Activated B cell treated with CpG ODN at 0.5 μM for 24 hours (primary cell): ENCODE measurements at regions of chr2 and their contacts with region 1.

Region 1: GRCh38 chr2:177254433-177255226 is 9.9 kb downstream of the NFE2L2 start:
- DNase-seq: no peak
- ATAC-seq: no peak
- H3K4me3 Mint-ChIP-seq: no peak overlapping the region
- H3K27ac Mint-ChIP-seq: no peak overlapping the region
- H3K4me1 Mint-ChIP-seq: peaks cover 87% of the 10 kb centered on the region
- H3K27me3 Mint-ChIP-seq: no peaks in the 10 kb centered on the region
- CTCF ChIP-seq: no peak

Region 2: GRCh38 chr2:177239932-177240630 is 14.5 kb before region 1 on chr2:
- CTCF ChIA-PET with region 1: no interaction called
- POLR2A ChIA-PET with region 1: no interaction called
- intact Hi-C with region 1: loop called (anchors 1 kb)
- DNase-seq: no peak
- ATAC-seq: peak; percentile 84
- H3K4me3 Mint-ChIP-seq: peak overlapping the region; percentile 49
- H3K27ac Mint-ChIP-seq: peak overlapping the region; percentile 70
- H3K4me1 Mint-ChIP-seq: peaks cover 74% of the 10 kb centered on the region
- H3K27me3 Mint-ChIP-seq: no peaks in the 10 kb centered on the region
- CTCF ChIP-seq: no peak

Region 3: GRCh38 chr2:177641331-177641730 is 386.7 kb after region 1 on chr2:
- CTCF ChIA-PET with region 1: no interaction called
- POLR2A ChIA-PET with region 1: no interaction called
- intact Hi-C with region 1: no loop called
- DNase-seq: no peak
- ATAC-seq: no peak
- H3K4me3 Mint-ChIP-seq: no peak overlapping the region
- H3K27ac Mint-ChIP-seq: no peak overlapping the region
- H3K4me1 Mint-ChIP-seq: peaks cover 4% of the 10 kb centered on the region
- H3K27me3 Mint-ChIP-seq: peaks cover 4% of the 10 kb centered on the region
- CTCF ChIP-seq: no peak